HCT116 (cell line): ENCODE measurements at regions of chr3 and their contacts with region 1.

Region 1: DNA sequence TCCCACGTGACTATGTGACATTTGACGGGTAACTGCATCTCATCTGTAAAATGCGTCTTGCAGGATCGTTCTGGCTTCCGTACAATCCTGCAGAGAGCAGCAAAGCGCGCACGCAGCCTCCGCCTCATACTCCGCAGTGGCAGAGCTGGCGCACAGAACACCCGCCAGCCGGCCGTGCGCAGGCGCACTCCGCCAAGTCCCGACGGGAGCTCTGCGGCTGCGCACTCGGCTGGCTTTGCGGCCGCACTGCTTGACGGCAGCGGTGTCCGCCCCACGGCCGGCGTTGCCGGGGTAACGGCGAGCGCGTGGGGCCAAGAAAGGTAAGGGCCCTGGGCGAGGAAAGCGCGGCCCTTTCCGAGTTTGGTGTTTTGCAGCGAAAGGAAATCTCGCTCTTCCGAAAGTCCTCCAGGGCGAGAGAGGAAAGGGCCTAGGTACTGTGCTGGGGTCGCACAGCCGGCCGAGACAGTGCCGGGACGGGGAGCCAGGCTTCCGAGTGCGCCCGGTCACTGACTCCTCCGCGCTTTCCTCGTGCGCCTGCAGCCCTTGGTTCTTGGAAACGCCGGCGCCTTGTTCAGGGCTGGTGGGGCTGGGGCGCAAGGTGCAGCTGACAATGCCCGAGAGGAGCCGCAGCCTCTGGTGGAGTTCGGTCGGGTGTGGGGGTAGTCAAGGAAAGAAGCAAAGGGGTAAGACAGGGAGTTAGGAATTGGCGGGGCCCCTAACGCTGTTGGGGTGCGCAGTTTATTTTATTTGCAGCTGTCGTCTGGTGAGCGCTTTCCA is at the start of gene TSEN2:
- DNase-seq: peak; percentile 90
- ATAC-seq: peak; percentile 92
- H3K4me3 ChIP-seq: peak within 1 kb of the TSS; percentile 87 to 96
- H3K27ac ChIP-seq: peak within 1 kb of the TSS; percentile 74
- H3K4me1 ChIP-seq: peaks cover 12 to 33% of the 10 kb centered on the region in 2 experiments; a peak in 3 of 4 replicates
- H3K27me3 ChIP-seq: no peaks in the 10 kb centered on the region
- CTCF ChIP-seq: no peak
- POLR2A ChIP-seq: peak; percentile 95
- RAD21 ChIP-seq: no peak
- total RNA-seq, gene TSEN2: 35.5 TPM

Region 2: DNA sequence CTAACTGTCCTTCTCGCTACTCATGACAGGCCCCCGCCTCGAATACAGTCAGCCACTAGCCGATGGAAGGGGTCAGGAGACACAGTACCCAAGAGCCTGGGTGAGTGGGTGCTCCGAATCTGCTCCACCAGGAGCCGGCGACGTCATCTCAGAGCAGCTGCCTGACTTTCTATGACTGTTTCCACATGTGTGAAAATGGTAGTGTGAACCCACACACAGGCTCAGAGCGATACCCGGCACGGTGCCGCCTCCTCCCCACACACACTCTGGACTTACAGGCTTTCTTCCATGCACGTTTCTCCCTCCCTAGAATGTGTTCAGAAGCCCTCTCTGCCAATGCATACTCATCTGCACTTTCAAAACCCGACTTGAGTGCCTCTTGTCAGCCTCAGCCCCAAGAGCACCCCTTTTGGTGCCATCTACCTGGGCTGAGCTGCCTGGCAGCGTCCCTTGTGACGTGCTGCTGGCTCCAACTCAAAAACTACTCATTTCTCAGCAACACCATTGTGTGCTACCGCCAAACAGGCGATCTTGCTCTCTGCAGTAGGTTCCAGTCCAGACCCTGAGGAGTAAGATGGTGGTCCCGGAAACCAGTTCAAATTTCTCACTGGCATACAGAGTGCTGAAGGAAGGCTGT is 870.4 kb before region 1 on chr3:
- CTCF ChIA-PET with region 1: no interaction called
- POLR2A ChIA-PET with region 1: no interaction called
- RAD21 ChIA-PET with region 1: no interaction called
- intact Hi-C with region 1: no loop called
- DNase-seq: no peak
- ATAC-seq: no peak
- H3K4me3 ChIP-seq: no peak overlapping the region
- H3K27ac ChIP-seq: no peak overlapping the region
- H3K4me1 ChIP-seq: no peaks in the 10 kb centered on the region
- H3K27me3 ChIP-seq: no peaks in the 10 kb centered on the region
- CTCF ChIP-seq: no peak
- POLR2A ChIP-seq: no peak
- RAD21 ChIP-seq: no peak

Region 3: DNA sequence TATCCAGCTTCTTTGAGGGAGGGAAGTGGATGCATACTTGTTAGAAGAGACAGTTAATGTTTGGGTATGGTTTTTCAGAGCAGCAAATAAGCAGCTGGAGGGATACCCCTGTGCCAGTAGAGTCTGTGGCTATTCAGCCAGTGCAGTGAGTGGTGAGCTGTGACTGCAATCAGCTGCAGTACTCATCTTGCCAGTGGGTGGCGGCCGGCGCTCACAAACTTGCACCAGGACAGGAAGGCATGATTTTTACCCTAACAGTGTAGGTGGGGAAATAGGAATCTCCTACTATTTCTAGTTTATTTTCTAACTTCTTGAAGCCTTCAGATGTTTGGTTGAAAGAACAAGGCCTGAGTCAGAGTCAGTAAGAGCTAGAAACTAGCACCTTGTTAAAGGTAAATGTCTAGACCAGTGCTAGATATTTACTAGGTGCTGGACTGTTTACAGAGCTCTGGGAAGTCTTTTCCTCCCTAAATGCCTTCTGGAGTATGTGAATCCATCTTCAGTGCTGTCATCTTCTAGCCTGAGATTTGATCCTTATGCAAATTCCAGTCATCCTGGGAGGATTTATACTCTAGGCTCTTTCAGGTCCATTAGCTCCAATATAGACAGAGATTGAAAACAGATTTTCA is 349.2 kb before region 1 on chr3:
- CTCF ChIA-PET with region 1: interaction called, 90 read pairs
- POLR2A ChIA-PET with region 1: interaction called, 7 read pairs
- RAD21 ChIA-PET with region 1: interaction called, 12 to 16 read pairs
- intact Hi-C with region 1: loop called (anchors 1 kb)
- DNase-seq: peak; percentile 34
- ATAC-seq: peak; percentile 96
- H3K4me3 ChIP-seq: no peak overlapping the region
- H3K27ac ChIP-seq: no peak overlapping the region
- H3K4me1 ChIP-seq: no peaks in the 10 kb centered on the region
- H3K27me3 ChIP-seq: no peaks in the 10 kb centered on the region
- CTCF ChIP-seq: peak; percentile 84 to 94 (median 90)
- POLR2A ChIP-seq: no peak
- RAD21 ChIP-seq: peak; percentile 96

Region 4: GRCh38 chr3:12175844-12176453 is 308.4 kb before region 1 on chr3:
- CTCF ChIA-PET with region 1: interaction called, 20 read pairs
- POLR2A ChIA-PET with region 1: no interaction called
- RAD21 ChIA-PET with region 1: interaction called, 3 to 14 read pairs
- intact Hi-C with region 1: loop called (anchors 5 kb)
- DNase-seq: peak; percentile 28
- ATAC-seq: peak; percentile 87
- H3K4me3 ChIP-seq: no peak overlapping the region
- H3K27ac ChIP-seq: no peak overlapping the region
- H3K4me1 ChIP-seq: peaks cover 12 to 40% of the 10 kb centered on the region in 2 experiments
- H3K27me3 ChIP-seq: no peaks in the 10 kb centered on the region
- CTCF ChIP-seq: peak; percentile 71 to 90 (median 85)
- POLR2A ChIP-seq: no peak
- RAD21 ChIP-seq: peak; percentile 94

Region 5: GRCh38 chr3:12193485-12194165 is 290.8 kb before region 1 on chr3:
- CTCF ChIA-PET with region 1: interaction called, 33 read pairs
- POLR2A ChIA-PET with region 1: interaction called, 10 read pairs
- RAD21 ChIA-PET with region 1: interaction called, 3 read pairs
- intact Hi-C with region 1: loop called (anchors 5 kb)
- DNase-seq: peak; percentile 90
- ATAC-seq: peak; percentile 81
- H3K4me3 ChIP-seq: peak overlapping the region in 1 of 2 experiments; percentile 23; a peak in 2 of 4 replicates
- H3K27ac ChIP-seq: peak overlapping the region; percentile 64
- H3K4me1 ChIP-seq: peaks cover 27 to 45% of the 10 kb centered on the region in 2 experiments
- H3K27me3 ChIP-seq: no peaks in the 10 kb centered on the region
- CTCF ChIP-seq: no peak
- POLR2A ChIP-seq: no peak
- RAD21 ChIP-seq: no peak

Region 6: GRCh38 chr3:12294885-12295580 is 189.4 kb before region 1 on chr3:
- CTCF ChIA-PET with region 1: no interaction called
- POLR2A ChIA-PET with region 1: no interaction called
- RAD21 ChIA-PET with region 1: no interaction called
- intact Hi-C with region 1: loop called (anchors 5 kb)
- DNase-seq: peak; percentile 15
- ATAC-seq: peak; percentile 57
- H3K4me3 ChIP-seq: no peak overlapping the region
- H3K27ac ChIP-seq: peak overlapping the region; percentile 39; the same call in 1 of the 2 replicates
- H3K4me1 ChIP-seq: peaks cover 15 to 40% of the 10 kb centered on the region in 2 experiments
- H3K27me3 ChIP-seq: no peaks in the 10 kb centered on the region
- CTCF ChIP-seq: no peak
- POLR2A ChIP-seq: no peak
- RAD21 ChIP-seq: no peak

Region 7: GRCh38 chr3:12444582-12445468 is 39.6 kb before region 1 on chr3:
- CTCF ChIA-PET with region 1: no interaction called
- POLR2A ChIA-PET with region 1: no interaction called
- RAD21 ChIA-PET with region 1: no interaction called
- intact Hi-C with region 1: loop called (anchors 1 kb)
- DNase-seq: peak; percentile 88
- ATAC-seq: peak; percentile 87
- H3K4me3 ChIP-seq: peak overlapping the region; percentile 36 to 47
- H3K27ac ChIP-seq: peak overlapping the region; percentile 89
- H3K4me1 ChIP-seq: peaks cover 30 to 68% of the 10 kb centered on the region in 2 experiments
- H3K27me3 ChIP-seq: no peaks in the 10 kb centered on the region
- CTCF ChIP-seq: no peak
- POLR2A ChIP-seq: no peak
- RAD21 ChIP-seq: no peak

Region 8: DNA sequence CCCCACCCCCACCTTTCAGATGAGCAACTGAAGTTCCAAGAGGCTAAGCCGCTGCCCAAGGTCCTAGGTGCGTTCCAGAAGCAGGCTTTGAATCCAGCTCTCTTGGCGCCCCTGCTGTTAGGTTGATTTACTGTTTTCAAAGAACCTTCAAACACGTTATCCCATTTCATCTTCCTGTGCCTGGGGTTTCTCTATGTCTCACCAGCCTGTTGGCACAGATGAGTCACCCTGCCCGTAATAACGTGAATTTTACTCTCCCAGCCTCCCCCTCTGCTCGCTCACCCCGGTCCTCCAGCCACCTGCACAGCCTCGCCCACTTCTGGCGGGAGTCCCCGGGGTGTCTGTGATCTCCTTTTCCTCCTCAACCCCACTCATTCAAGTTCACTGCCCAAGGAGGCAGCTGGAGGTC is 13.1 kb before region 1 on chr3:
- CTCF ChIA-PET with region 1: interaction called, 23 read pairs
- POLR2A ChIA-PET with region 1: interaction called, 4 read pairs
- RAD21 ChIA-PET with region 1: interaction called, 3 to 4 read pairs
- intact Hi-C with region 1: no loop called
- DNase-seq: peak; percentile 92
- ATAC-seq: peak; percentile 91
- H3K4me3 ChIP-seq: peak overlapping the region in 1 of 2 experiments; percentile 38; a peak in 2 of 4 replicates
- H3K27ac ChIP-seq: peak overlapping the region; percentile 72
- H3K4me1 ChIP-seq: peaks cover 26 to 54% of the 10 kb centered on the region in 2 experiments
- H3K27me3 ChIP-seq: no peaks in the 10 kb centered on the region
- CTCF ChIP-seq: peak in 2 of 3 experiments; percentile 28 to 37; a peak in 3 of 6 replicates
- POLR2A ChIP-seq: no peak
- RAD21 ChIP-seq: peak; percentile 83